Activated CD8-positive, alpha-beta memory T cell treated with anti-CD3 and anti-CD28 coated beads, Interleukin-2, amount 10 ng/mL, durations not matched to agents 7 days and 5 days (primary cell): ENCODE measurements at regions of chr7 and their contacts with region 1.

Region 1: GRCh38 chr7:1418505-1419309 is 40.6 kb downstream of the MICALL2 start:
- DNase-seq: no peak
- ATAC-seq: no peak
- H3K4me3 Mint-ChIP-seq: no peak overlapping the region
- H3K27ac Mint-ChIP-seq: peak overlapping the region; percentile 25
- H3K4me1 Mint-ChIP-seq: peaks cover 25% of the 10 kb centered on the region
- H3K27me3 Mint-ChIP-seq: peaks cover 13% of the 10 kb centered on the region

Region 2: DNA sequence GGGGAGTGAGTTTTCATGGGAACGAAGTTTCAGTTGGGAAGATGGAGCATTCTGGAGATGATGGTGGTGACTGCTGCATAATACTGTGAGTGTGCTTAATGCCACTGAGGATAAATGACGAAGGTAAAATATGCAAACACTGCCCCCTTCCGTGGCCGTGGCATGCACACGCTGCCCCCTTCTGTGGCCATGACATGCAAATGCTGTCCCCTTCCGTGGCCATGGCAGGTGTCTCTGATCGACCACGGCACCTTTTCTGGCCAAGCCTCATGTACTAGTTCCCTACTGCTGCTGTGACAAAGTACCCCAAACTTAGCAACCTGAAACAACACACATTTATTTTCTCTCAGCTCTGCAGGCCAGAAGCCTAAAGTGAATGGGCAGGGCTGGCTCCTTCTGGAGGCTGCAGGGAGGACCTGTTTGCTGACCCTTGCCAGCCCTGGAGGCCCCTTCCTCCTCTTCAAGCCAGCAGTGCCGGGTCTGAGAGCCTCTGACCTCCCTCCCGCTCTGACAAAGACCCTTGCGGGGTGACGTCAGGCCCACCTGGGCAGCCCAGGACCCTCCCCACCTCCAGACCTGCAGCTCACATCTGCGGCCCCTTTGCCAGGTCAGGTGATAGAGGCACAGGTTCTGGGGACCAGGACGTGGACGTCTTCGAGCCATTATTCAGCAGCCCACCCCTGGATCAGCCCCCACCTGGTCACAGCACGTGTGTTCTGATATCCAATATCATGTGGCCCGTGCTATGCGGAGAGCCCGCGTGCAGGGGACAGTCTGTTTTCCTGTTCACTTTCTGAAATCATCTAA is 41.4 kb before region 1 on chr7:
- CTCF ChIA-PET with region 1: no interaction called
- DNase-seq: no peak
- ATAC-seq: no peak
- H3K4me3 Mint-ChIP-seq: no peak overlapping the region
- H3K27ac Mint-ChIP-seq: no peak overlapping the region
- H3K4me1 Mint-ChIP-seq: no peaks in the 10 kb centered on the region
- H3K27me3 Mint-ChIP-seq: peaks cover 4% of the 10 kb centered on the region

Region 3: GRCh38 chr7:1432411-1433082 is 13.8 kb after region 1 on chr7:
- CTCF ChIA-PET with region 1: interaction called, 19 read pairs
- DNase-seq: peak; percentile 83
- ATAC-seq: peak; percentile 84
- H3K4me3 Mint-ChIP-seq: no peak overlapping the region
- H3K27ac Mint-ChIP-seq: no peak overlapping the region
- H3K4me1 Mint-ChIP-seq: peaks cover 2% of the 10 kb centered on the region
- H3K27me3 Mint-ChIP-seq: peaks cover 5% of the 10 kb centered on the region

Region 4: GRCh38 chr7:1709900-1710299 is 291.2 kb after region 1 on chr7:
- CTCF ChIA-PET with region 1: no interaction called
- DNase-seq: no peak
- ATAC-seq: no peak
- H3K4me3 Mint-ChIP-seq: no peak overlapping the region
- H3K27ac Mint-ChIP-seq: no peak overlapping the region
- H3K4me1 Mint-ChIP-seq: no peaks in the 10 kb centered on the region
- H3K27me3 Mint-ChIP-seq: no peaks in the 10 kb centered on the region